ENCODE measurements at regions of chr2 and their contacts with region 1.

Region 1: DNA sequence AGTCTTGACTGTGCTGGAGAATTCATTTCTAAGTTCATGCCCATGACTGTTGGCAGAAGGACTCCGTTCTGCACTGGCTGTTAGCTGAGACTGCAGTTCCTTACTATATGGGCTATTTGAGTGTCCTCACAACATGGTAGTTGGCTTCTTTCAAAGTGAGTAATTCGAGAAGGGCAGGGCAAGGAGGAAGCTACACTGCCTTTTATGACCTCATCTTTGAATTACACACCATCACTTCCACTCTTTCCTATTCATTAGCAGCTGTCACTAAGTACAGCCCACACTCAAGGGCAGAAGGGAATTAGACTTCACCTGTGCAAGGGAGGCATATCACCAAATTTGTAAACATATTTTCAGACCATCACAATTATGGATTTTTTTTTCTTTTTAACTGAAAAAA is 55.9 kb upstream of the EPAS1 start:
- DNase-seq: no peak
- H3K4me3 ChIP-seq: no peak overlapping the region
- H3K27ac ChIP-seq: no peak overlapping the region
- H3K4me1 ChIP-seq: no peaks in the 10 kb centered on the region
- H3K27me3 ChIP-seq: no peaks in the 10 kb centered on the region
- CTCF ChIP-seq: no peak
- EP300 ChIP-seq: no peak
- POLR2A ChIP-seq: no peak
- RAD21 ChIP-seq: no peak

Region 2: DNA sequence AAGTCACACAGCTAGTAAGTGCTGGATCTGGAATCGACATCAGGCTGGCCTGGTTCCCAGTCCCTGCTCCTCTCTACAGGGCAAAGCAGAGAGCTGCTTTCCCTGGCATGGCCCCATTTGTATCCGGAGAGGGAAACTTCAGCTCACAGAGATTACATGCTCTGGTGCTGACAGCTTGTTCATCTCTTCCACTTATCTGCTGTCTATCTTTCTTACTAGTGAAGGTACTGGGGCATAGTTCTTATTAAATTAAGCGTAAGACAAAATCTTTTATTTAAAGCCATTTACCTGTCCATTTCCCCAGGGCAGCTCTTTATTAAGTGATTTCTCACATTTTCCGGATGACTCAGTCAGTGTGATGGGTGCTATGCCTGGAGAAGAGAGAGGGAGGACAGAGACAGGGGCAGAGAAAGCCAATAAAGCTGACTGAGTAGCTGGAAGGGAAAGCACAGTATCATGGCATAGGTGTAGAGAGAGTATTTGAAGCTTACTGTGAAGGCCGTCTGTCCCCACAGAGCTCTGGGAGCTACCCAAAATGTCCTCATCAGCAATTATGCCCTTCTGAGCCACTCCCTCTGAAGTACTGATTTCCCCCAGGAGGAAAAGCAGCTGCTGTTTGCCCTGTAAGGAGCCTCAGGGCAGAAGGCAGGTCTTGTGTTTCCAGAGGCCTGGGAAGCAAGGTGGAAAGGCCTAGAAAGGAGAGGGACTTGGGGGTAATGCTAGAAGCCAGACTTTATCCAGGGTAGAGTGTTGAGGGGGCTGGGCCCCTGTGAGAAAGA is 11.7 kb after region 1 on chr2:
- CTCF ChIA-PET with region 1: interaction called, 10 read pairs
- POLR2A ChIA-PET with region 1: no interaction called
- DNase-seq: no peak
- H3K4me3 ChIP-seq: no peak overlapping the region
- H3K27ac ChIP-seq: no peak overlapping the region
- H3K4me1 ChIP-seq: no peaks in the 10 kb centered on the region
- H3K27me3 ChIP-seq: 0 out of 7 replicates have a peak, but pooled peaks cover 0 to 2% (median 0%) of the 10 kb centered on the region in 4 experiments
- CTCF ChIP-seq: no peak
- EP300 ChIP-seq: no peak
- POLR2A ChIP-seq: no peak
- RAD21 ChIP-seq: no peak

Measured in H1 (cell line).